ENCODE measurements at regions of chr17 and their contacts with region 1.

Region 1: DNA sequence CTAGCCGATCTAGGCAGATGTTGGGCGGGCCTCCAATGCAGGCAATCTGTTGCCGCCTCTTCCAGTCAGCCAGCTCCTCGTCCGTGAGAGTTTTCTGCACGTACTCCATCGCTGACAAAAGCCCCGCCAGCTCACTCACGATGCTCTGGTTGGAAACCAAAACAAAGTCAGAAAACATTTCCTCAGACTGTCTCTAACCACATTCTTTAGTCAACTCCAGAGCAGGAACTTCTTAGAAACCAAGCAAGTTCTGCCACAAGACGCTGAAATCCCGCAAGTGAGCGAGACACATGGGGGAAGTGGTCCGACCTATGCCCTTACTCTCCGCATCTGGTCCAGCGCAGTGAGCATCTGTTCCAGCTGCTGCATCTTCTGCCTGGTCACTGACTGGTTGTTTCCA is 49.1 kb downstream of the STAT5A start:
- DNase-seq: peak; percentile 93
- ATAC-seq: peak; percentile 60
- H3K4me3 Mint-ChIP-seq: peak overlapping the region; percentile 53
- H3K27ac Mint-ChIP-seq: peak overlapping the region; percentile 94
- H3K4me1 Mint-ChIP-seq: peaks cover 86% of the 10 kb centered on the region
- H3K27me3 Mint-ChIP-seq: no peaks in the 10 kb centered on the region

Region 2: DNA sequence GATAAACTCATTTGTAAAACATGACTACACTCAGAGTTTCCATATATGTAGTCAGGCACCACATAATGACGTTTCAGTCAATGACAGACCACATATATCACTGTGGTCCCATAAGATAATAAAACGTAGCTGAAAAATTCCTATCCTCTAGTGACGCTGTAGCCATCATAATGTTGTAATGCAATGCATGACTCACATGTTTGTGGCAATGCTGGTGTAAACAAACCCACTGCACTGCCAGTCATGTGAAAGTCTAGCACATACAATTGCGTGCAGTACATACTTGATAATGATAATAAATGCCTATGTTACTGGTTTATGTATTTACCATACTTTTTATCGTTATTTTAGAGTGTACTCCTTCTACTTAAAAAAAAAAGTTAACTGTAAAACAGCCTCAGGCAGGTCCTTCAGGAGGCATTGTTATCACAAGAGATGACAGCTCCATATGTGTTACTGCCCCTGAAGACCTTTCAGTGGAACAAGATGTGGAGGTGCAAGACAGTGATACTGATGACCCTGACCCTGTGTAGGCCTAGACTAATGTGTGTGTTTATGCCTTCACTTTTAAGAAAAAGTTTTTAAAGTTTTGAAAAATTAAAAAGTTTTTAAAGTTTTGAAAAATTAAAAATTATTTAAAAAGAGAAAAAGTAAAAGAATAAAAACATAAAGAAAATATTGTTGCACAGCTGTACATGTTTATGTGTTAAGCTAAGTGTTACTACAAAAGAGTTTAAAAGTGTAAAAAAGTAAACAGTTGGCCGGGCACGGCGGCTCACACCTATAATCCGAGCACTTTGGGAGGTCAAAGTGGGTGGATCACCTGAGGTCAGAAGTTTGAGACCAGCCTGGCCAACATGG is 70.3 kb before region 1 on chr17:
- CTCF ChIA-PET with region 1: interaction called, 3 read pairs
- POLR2A ChIA-PET with region 1: interaction called, 6 read pairs
- intact Hi-C with region 1: loop called in 1 of 2 experiments (anchors 2 kb)
- DNase-seq: peak; percentile 70
- ATAC-seq: peak; percentile 77
- H3K4me3 Mint-ChIP-seq: peak overlapping the region; percentile 47
- H3K27ac Mint-ChIP-seq: peak overlapping the region; percentile 98
- H3K4me1 Mint-ChIP-seq: peaks cover 61% of the 10 kb centered on the region
- H3K27me3 Mint-ChIP-seq: no peaks in the 10 kb centered on the region

Region 3: GRCh38 chr17:42322382-42323267 is 14.8 kb before region 1 on chr17:
- CTCF ChIA-PET with region 1: interaction called, 22 read pairs
- POLR2A ChIA-PET with region 1: interaction called, 3 read pairs
- intact Hi-C with region 1: loop called in 1 of 2 experiments (anchors 1 kb)
- DNase-seq: peak; percentile 97
- ATAC-seq: peak; percentile 87
- H3K4me3 Mint-ChIP-seq: peak overlapping the region; percentile 37
- H3K27ac Mint-ChIP-seq: peak overlapping the region; percentile 56
- H3K4me1 Mint-ChIP-seq: peaks cover 45% of the 10 kb centered on the region
- H3K27me3 Mint-ChIP-seq: no peaks in the 10 kb centered on the region

Region 4: GRCh38 chr17:42378597-42379594 is 41.5 kb after region 1 on chr17:
- CTCF ChIA-PET with region 1: interaction called, 4 read pairs
- POLR2A ChIA-PET with region 1: interaction called, 8 read pairs
- intact Hi-C with region 1: loop called in 1 of 2 experiments (anchors 2 kb)
- DNase-seq: peak; percentile 35
- ATAC-seq: peak; percentile 76
- H3K4me3 Mint-ChIP-seq: peak overlapping the region; percentile 64
- H3K27ac Mint-ChIP-seq: peak overlapping the region; percentile 88
- H3K4me1 Mint-ChIP-seq: peaks cover 76% of the 10 kb centered on the region
- H3K27me3 Mint-ChIP-seq: no peaks in the 10 kb centered on the region

Region 5: GRCh38 chr17:42405963-42406495 is 68.6 kb after region 1 on chr17:
- CTCF ChIA-PET with region 1: interaction called, 31 read pairs
- POLR2A ChIA-PET with region 1: interaction called, 6 read pairs
- intact Hi-C with region 1: no loop called
- DNase-seq: peak; percentile 91
- ATAC-seq: peak; percentile 69
- H3K4me3 Mint-ChIP-seq: no peak overlapping the region
- H3K27ac Mint-ChIP-seq: no peak overlapping the region
- H3K4me1 Mint-ChIP-seq: peaks cover 19% of the 10 kb centered on the region
- H3K27me3 Mint-ChIP-seq: no peaks in the 10 kb centered on the region

Measured in activated CD4-positive, alpha-beta T cell treated with anti-CD3 and anti-CD28 coated beads for 36 hours (primary cell).